ENCODE measurements at regions of chr6 and their contacts with region 1.

Region 1: GRCh38 chr6:152982768-152983636 is at the start of gene FBXO5:
- DNase-seq: peak; percentile 91 to 98 (median 97)
- H3K4me3 ChIP-seq: peak within 1 kb of the TSS; percentile 64 to 99 (median 86)
- H3K27ac ChIP-seq: peak within 1 kb of the TSS; percentile 75 to 99 (median 96)
- H3K27me3 ChIP-seq: no peaks in the 10 kb centered on the region
- CTCF ChIP-seq: peak in 8 of 56 donors; percentile 9 to 30 (median 16)
- total RNA-seq, gene FBXO5: 1.0 to 4.6 (median 2.7) TPM

Region 2: DNA sequence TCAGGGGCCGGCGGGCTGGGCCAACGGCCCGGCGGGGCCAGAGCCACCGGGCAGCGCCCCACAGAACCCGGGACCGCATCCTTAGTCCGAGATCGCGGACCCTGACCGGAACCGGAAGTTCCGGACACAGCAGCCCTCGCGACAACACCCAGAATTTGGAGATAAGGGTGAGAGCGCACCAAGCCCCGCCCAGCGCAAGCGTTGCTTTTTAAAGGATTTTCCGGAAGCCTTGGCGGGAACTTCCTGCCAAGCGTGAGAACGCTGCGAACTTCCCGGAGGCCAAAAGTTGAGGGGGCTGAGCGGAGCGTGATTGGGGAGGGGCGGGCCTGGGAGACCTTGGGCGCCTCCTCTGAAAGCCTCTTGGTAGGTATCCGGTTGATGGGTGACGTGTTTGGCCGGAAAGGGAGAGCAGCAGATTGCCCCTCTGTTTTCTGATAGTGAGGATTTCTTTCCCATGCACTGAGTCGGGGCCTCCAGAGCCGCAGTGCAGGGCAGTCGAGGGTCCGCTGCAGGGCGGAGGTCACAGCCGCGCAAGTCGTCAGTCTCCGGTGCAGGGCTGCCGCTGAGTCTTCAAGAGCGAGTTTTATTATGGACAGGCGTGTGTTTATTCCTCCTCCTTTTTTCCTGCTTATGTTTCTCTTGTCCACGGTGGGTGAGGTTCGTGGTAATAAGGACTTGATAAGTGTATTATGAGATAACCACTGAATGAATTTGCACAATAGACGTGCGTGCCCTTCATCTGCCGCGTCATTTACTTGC is 19.8 kb after region 1 on chr6 and contains the start of gene MTRF1L:
- intact Hi-C with region 1: loop called (anchors 2 kb)
- DNase-seq: peak; percentile 78 to 96 (median 91)
- H3K4me3 ChIP-seq: peak within 1 kb of the TSS; percentile 52 to 97 (median 83)
- H3K27ac ChIP-seq: peak within 1 kb of the TSS; percentile 3 to 94 (median 83)
- H3K27me3 ChIP-seq: no peaks in the 10 kb centered on the region
- CTCF ChIP-seq: peak in 19 of 56 donors; percentile 4 to 38 (median 17)
- total RNA-seq, gene MTRF1L: 13.7 to 29.4 (median 20.7) TPM

Region 3: GRCh38 chr6:153117986-153118879 is 135.2 kb after region 1 on chr6:
- intact Hi-C with region 1: no loop called
- DNase-seq: no peak
- H3K4me3 ChIP-seq: no peak overlapping the region
- H3K27ac ChIP-seq: no peak overlapping the region
- H3K27me3 ChIP-seq: no peaks in the 10 kb centered on the region
- CTCF ChIP-seq: no peak

Measured in dorsolateral prefrontal cortex (tissue), 120 donors.